Panc1 (cell line): ENCODE measurements at regions of chr10 and their contacts with region 1.

Region 1: GRCh38 chr10:132133005-132133404 is 53.7 kb upstream of the DPYSL4 start:
- DNase-seq: no peak
- ATAC-seq: no peak
- H3K4me3 ChIP-seq: no peak overlapping the region
- H3K27ac ChIP-seq: no peak overlapping the region
- H3K4me1 ChIP-seq: no peaks in the 10 kb centered on the region
- H3K27me3 ChIP-seq: peaks cover 4% of the 10 kb centered on the region; the same call in 1 of the 2 replicates
- CTCF ChIP-seq: no peak

Region 2: GRCh38 chr10:132036153-132036886 is 96.7 kb before region 1 on chr10:
- CTCF ChIA-PET with region 1: no interaction called
- POLR2A ChIA-PET with region 1: no interaction called
- in situ Hi-C with region 1: no loop called
- intact Hi-C with region 1: loop called (anchors 10 kb)
- DNase-seq: no peak
- ATAC-seq: peak; percentile 84
- H3K4me3 ChIP-seq: peak overlapping the region; percentile 44 to 50
- H3K27ac ChIP-seq: no peak overlapping the region
- H3K4me1 ChIP-seq: peaks cover 4% of the 10 kb centered on the region; the same call in 1 of the 2 replicates
- H3K27me3 ChIP-seq: peaks cover 19% of the 10 kb centered on the region
- CTCF ChIP-seq: no peak